PC-3 (cell line): ENCODE measurements at regions of chr7 and their contacts with region 1.

Region 1: DNA sequence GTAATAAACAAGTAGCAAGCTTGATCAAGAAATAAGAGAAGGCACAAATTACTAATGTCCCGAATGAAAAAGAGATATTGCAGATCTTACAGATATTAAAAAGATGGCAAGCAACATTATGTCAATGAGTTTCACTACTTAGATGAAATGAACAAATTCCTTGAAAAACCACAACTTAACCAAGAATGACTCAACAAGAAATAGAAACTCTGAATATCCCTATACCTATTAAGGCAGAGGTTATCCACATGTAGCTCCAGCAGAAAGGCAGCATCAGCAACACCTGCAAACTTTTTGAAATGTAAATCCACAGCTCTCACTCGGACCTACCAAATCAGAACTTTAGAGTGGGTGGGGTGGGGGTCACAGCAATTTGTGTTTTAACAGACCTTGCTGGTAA is 33.6 kb downstream of the PDE1C start:
- DNase-seq: peak; percentile 77
- ATAC-seq: peak; percentile 76
- H3K4me3 ChIP-seq: no peak overlapping the region; the same call in 1 of the 2 replicates
- H3K27ac ChIP-seq: peak overlapping the region; percentile 68
- H3K4me1 ChIP-seq: peaks cover 58% of the 10 kb centered on the region
- H3K27me3 ChIP-seq: no peaks in the 10 kb centered on the region
- CTCF ChIP-seq: no peak

Region 2: GRCh38 chr7:31735991-31736982 is 300.3 kb before region 1 on chr7:
- CTCF ChIA-PET with region 1: no interaction called
- POLR2A ChIA-PET with region 1: no interaction called
- intact Hi-C with region 1: no loop called
- DNase-seq: peak; percentile 79
- ATAC-seq: peak; percentile 95
- H3K4me3 ChIP-seq: no peak overlapping the region
- H3K27ac ChIP-seq: no peak overlapping the region
- H3K4me1 ChIP-seq: no peaks in the 10 kb centered on the region
- H3K27me3 ChIP-seq: no peaks in the 10 kb centered on the region
- CTCF ChIP-seq: peak; percentile 84

Region 3: DNA sequence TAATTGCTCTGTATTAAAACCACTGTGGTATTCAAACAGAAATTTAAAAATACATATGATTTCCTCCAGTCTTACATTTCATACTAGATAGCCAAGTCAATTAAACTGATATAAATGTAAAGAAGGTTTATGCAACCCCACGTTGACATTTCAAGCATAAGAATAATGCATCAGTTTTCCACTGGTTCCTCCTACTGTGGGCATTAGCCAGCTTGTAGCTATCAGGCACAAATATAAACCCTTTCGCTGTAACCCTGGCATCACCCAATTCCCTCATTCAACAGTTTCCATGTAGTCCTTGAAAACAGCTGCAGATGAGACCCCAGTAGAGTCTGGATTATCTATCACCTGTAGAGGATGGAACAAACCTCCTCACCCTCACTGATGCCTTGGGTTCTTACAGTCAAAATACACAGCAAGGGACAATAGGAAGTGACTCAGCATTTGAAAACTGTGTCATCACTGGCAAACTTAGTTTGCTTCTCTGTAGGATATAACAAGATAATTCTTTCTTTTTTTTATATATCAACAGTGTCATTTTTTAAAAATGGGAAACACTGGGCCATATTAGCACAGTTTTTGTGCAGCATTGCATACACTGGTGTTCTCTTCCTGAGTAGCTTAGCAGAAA is 79.4 kb before region 1 on chr7:
- CTCF ChIA-PET with region 1: no interaction called
- POLR2A ChIA-PET with region 1: no interaction called
- intact Hi-C with region 1: loop called (anchors 5 kb)
- DNase-seq: peak; percentile 78
- ATAC-seq: peak; percentile 76
- H3K4me3 ChIP-seq: no peak overlapping the region
- H3K27ac ChIP-seq: peak overlapping the region; percentile 59
- H3K4me1 ChIP-seq: peaks cover 43% of the 10 kb centered on the region
- H3K27me3 ChIP-seq: no peaks in the 10 kb centered on the region
- CTCF ChIP-seq: no peak

Region 4: GRCh38 chr7:32774541-32774951 is 738.0 kb after region 1 on chr7:
- CTCF ChIA-PET with region 1: no interaction called
- POLR2A ChIA-PET with region 1: no interaction called
- intact Hi-C with region 1: no loop called
- DNase-seq: no peak
- ATAC-seq: no peak
- H3K4me3 ChIP-seq: no peak overlapping the region
- H3K27ac ChIP-seq: no peak overlapping the region
- H3K4me1 ChIP-seq: no peaks in the 10 kb centered on the region; the same call in 1 of the 2 replicates
- H3K27me3 ChIP-seq: no peaks in the 10 kb centered on the region
- CTCF ChIP-seq: no peak